ENCODE measurements at regions of chr12 and their contacts with region 1.

Region 1: DNA sequence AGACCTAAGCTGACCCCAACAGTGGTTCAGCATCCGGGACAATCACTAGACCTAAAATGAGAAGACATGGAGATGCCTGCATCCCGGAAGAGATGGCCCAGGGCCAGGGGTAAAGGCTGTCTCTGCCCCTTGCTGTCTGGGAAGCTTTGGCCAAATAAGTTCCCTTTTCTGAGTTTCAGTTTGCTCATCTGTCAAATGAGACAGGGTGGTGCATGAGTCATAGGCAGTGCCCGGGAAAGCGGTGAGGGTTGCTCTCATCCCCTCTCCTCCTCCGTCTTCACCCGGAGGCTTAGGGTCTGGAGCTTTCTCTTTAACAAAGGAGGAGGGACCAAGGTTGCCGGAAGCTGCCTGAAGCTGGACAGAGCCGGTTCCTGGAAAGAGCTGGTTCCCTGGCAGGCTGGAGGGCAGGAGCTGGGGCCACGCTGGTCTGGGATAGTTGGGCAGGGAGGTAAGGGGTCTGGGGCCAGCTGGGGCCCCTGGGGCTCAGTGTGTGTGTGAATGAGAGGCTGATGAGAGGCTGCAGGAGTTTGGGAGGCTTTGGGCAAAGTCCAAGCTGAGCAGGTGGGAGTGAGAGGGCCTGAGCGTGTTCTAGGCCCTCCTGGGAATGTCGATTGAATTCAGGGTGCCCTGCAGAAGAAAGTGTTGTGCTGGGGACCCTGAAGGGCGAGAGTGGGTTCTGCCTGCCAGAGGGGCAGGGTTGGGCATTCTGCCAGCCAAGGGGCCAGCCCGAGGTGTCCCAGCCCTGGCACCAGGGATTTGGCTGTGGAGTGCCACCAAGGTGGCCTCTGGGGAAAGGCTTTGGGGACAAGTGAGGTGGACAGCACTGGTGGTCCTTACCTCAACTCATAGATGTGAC is at the start of gene SDSL:
- DNase-seq: peak; percentile 93
- total RNA-seq, gene SDSL: 1.1 to 5.5 TPM

Region 2: GRCh38 chr12:113190761-113191160 is 231.5 kb before region 1 on chr12:
- intact Hi-C with region 1: loop called (anchors 5 to 10 kb)
- DNase-seq: no peak

Region 3: DNA sequence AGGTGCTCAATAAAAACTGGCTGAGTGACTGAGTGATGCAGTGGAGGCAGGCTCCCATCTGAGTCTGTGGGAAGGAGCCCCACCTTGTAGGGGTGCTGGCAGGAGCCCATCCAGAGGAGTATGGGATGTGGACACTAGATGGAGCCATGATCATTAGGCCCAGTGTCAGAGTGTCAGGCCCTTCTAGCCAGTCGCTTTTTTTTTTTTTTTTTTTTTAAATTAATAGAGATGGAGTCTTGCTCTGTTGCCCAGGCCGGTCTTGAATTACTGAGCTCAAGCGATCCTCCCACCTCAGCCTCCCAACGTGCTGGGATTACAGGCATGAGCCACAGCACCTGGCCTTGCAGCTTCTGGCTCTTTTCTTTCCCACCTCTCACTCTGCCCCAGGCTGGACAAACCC is 225.3 kb before region 1 on chr12:
- intact Hi-C with region 1: loop called (anchors 5 to 10 kb)
- DNase-seq: peak; percentile 86

Region 4: DNA sequence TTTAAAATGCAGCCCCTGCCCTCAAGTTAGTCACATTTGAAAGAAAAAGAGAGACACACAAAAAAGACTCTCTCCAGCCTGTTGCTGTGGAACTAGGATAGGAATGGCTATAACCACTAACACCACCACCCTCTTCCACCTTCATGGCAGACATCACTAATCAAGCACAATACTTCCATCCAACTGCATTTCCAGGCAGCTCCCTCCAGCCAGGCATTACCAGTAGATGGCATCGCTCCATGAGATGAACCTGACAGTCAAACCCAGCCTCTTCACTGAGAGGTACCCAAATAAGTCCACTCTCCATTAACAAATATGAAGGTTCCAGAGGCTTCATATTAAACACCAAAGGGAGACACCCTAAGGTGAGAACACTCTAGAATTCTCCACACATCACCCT is 111.8 kb before region 1 on chr12:
- intact Hi-C with region 1: loop called in 1 of 2 experiments (anchors 10 kb)
- DNase-seq: no peak